Ascending aorta (tissue), 2 donors: ENCODE measurements at regions of chr16 and their contacts with region 1.

Region 1: GRCh38 chr16:30122604-30123160 is 338 bp downstream of the MAPK3 start:
- DNase-seq: peak in 1 of 2 donors; percentile 72
- H3K4me3 ChIP-seq: peak overlapping the region; percentile 88 to 99
- H3K27ac ChIP-seq: peak overlapping the region; percentile 86 to 92
- H3K4me1 ChIP-seq: peaks cover 0 to 9% of the 10 kb centered on the region in 2 donors
- H3K27me3 ChIP-seq: no peaks in the 10 kb centered on the region
- CTCF ChIP-seq: no peak

Region 2: GRCh38 chr16:30052671-30053372 is 69.9 kb before region 1 on chr16:
- intact Hi-C with region 1: loop called (anchors 5 kb)
- DNase-seq: peak in 1 of 2 donors; percentile 94
- H3K4me3 ChIP-seq: peak overlapping the region; percentile 79 to 88
- H3K27ac ChIP-seq: peak overlapping the region; percentile 41 to 59
- H3K4me1 ChIP-seq: peaks cover 0 to 12% of the 10 kb centered on the region in 2 donors
- H3K27me3 ChIP-seq: no peaks in the 10 kb centered on the region
- CTCF ChIP-seq: no peak

Region 3: DNA sequence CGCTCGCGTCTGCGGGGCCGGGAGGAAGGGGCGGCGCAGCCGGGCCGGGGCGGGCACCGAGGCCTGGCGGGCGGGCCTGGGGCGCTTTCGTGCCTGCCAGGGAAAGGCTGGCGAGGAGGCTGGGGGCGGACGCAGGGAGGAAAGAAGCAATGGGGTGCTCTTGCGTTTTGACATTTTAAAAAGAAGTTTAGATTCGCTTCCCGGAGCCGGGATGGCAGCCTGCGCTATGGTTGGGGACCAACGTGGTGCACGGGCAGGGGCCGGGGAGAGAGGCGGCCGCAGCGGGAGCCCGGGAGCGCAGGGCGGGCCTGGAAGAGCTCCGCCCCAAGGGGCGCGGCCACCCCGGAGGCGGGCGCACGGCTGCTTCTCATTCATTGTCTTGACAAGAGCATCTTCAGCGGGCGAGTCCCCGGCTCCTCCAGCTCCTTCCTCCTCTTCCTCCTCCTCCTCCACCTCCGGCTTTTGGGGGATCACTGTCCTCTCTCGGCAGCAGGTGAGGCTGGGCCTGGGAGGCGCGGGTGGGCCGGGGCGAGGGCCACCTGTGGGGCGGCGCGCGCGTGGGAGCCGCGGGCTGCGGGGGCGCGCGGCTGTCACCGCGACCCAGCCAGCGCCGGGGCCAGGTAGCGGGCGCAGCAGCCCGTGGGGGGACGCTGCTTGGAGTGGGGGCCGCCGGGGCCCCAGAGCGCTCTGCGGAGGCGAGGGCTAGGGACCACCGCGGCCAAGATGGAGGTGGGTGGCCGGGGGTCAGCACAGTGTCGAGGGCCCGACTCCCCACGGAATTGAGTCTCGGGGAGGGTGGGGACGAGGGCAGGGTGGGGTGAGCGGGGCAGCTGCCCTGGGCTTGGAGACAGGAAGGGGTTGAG is 60.8 kb after region 1 on chr16 and contains the start of gene CORO1A:
- intact Hi-C with region 1: loop called (anchors 5 kb)
- DNase-seq: peak in 1 of 2 donors; percentile 88
- H3K4me3 ChIP-seq: peak within 1 kb of the TSS; percentile 59 to 73
- H3K27ac ChIP-seq: peak within 1 kb of the TSS; percentile 68 to 72
- H3K4me1 ChIP-seq: peaks cover 3 to 9% of the 10 kb centered on the region in 2 donors
- H3K27me3 ChIP-seq: no peaks in the 10 kb centered on the region
- CTCF ChIP-seq: no peak
- total RNA-seq, gene CORO1A: 69.4 TPM